Colonic mucosa (tissue), 4 donors: ENCODE measurements at regions of chr11 and their contacts with region 1.

Region 1: DNA sequence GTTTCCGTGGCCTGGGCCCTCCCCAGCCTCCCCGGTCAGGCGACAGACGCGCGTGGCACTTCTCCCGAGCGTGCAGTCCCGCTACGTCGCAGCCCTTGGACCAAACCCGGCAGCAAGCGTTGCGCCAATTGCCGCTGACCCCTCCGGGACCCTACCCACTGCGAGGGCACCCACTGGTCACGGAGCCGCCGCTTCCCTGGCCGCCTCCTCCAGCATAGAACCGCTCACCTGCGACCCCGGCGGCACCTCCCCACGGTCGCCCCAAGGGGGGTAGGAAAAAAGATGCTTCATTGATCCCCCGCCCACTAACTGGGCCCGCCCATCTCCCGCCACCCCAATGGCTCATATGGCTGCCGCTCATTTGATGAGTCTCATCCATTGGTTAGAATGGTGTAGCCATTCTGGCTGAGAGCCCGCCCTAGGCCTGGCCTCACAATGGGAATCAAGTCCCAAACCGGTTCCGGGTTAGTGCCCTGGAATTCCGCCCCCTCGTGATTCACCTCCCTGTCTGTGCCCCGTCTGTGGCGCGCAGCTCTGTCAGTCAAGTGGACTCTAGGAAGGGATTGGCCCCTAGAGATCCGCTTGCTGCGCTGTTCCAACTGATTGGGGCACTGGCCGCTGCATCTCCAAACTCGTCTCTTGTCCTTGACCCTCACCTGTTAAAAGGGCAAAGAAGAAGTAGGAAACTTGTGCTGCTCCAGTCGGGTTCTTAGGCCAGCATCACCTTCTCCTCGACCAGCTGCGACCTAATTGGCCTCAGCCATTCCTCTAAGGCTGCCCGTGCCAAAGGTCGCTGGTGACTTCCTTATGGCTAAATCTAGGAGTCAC is at the start of gene MSANTD4:
- DNase-seq: peak; percentile 99
- H3K4me3 ChIP-seq: peak within 1 kb of the TSS; percentile 90
- H3K27ac ChIP-seq: peak within 1 kb of the TSS; percentile 61
- H3K4me1 ChIP-seq: no peaks in the 10 kb centered on the region
- H3K27me3 ChIP-seq: no peaks in the 10 kb centered on the region
- CTCF ChIP-seq: no peak
- total RNA-seq, gene MSANTD4: 6.2 to 6.8 TPM

Region 2: GRCh38 chr11:105923807-105924206 is 98.4 kb before region 1 on chr11:
- intact Hi-C with region 1: no loop called
- DNase-seq: no peak
- H3K4me3 ChIP-seq: no peak overlapping the region
- H3K27ac ChIP-seq: no peak overlapping the region
- H3K4me1 ChIP-seq: no peaks in the 10 kb centered on the region
- H3K27me3 ChIP-seq: no peaks in the 10 kb centered on the region
- CTCF ChIP-seq: no peak

Region 3: GRCh38 chr11:106076919-106077608 is 54.9 kb after region 1 on chr11 and contains the start of gene KBTBD3:
- intact Hi-C with region 1: loop called (anchors 5 kb)
- DNase-seq: peak; percentile 98
- H3K4me3 ChIP-seq: peak within 1 kb of the TSS; percentile 91
- H3K27ac ChIP-seq: peak within 1 kb of the TSS; percentile 96
- H3K4me1 ChIP-seq: no peaks in the 10 kb centered on the region
- H3K27me3 ChIP-seq: no peaks in the 10 kb centered on the region
- CTCF ChIP-seq: no peak
- total RNA-seq, gene KBTBD3: 6.6 to 6.7 TPM